Activated B cell treated with CpG ODN at 0.5 μM for 24 hours (primary cell): ENCODE measurements at regions of chr12 and their contacts with region 1.

Region 1: GRCh38 chr12:120971299-120972179 is 6.8 kb upstream of the HNF1A start:
- DNase-seq: no peak
- ATAC-seq: peak; percentile 94
- H3K4me3 Mint-ChIP-seq: no peak overlapping the region
- H3K27ac Mint-ChIP-seq: no peak overlapping the region
- H3K4me1 Mint-ChIP-seq: peaks cover 8% of the 10 kb centered on the region
- H3K27me3 Mint-ChIP-seq: peaks cover 3% of the 10 kb centered on the region
- CTCF ChIP-seq: no peak

Region 2: GRCh38 chr12:120356567-120357030 is 614.9 kb before region 1 on chr12:
- CTCF ChIA-PET with region 1: no interaction called
- POLR2A ChIA-PET with region 1: no interaction called
- intact Hi-C with region 1: loop called (anchors 5 kb)
- DNase-seq: peak; percentile 59
- ATAC-seq: peak; percentile 91
- H3K4me3 Mint-ChIP-seq: no peak overlapping the region
- H3K27ac Mint-ChIP-seq: no peak overlapping the region
- H3K4me1 Mint-ChIP-seq: peaks cover 3% of the 10 kb centered on the region
- H3K27me3 Mint-ChIP-seq: peaks cover 26% of the 10 kb centered on the region
- CTCF ChIP-seq: peak; percentile 22

Region 3: DNA sequence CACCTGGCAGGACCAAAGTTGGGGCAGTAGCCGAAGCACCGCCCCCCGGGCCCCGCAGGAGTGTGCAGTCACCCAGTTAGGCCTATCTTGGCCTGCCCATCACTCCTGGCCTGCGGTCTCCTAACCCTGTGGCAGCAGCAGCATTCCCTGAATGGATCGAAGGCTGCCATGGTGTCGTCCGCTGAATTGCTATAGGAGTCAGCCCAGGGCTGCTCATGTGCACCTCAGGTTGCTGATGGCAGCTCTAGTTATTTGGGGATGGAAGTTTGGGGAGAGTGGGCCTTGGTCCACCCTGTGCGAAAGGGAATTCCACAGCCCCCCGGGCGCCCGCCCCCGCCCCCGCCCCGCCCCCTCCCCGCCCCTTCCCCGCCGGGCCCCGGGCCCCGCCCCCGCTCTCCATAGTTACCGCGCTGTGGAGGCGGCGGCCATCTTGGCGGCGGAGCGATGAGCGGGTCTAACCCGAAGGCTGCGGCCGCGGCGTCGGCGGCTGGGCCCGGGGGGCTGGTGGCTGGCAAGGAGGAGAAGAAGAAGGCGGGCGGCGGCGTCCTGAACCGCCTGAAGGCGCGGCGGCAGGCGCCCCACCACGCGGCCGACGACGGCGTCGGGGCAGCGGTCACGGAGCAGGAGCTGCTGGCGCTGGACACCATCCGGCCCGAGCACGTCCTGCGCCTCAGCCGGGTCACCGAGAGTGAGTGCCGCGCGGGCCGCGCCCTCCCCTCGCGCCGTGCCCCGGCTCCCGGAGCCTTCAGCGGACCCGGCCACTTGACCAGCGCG is 261.3 kb before region 1 on chr12 and contains the start of gene UNC119B:
- CTCF ChIA-PET with region 1: interaction called, 7 read pairs
- POLR2A ChIA-PET with region 1: no interaction called
- intact Hi-C with region 1: loop called (anchors 1 kb)
- DNase-seq: peak; percentile 71
- ATAC-seq: peak; percentile 92
- H3K4me3 Mint-ChIP-seq: peak within 1 kb of the TSS; percentile 89
- H3K27ac Mint-ChIP-seq: peak within 1 kb of the TSS; percentile 82
- H3K4me1 Mint-ChIP-seq: peaks cover 29% of the 10 kb centered on the region
- H3K27me3 Mint-ChIP-seq: no peaks in the 10 kb centered on the region
- CTCF ChIP-seq: no peak
- total RNA-seq, gene UNC119B: 17.3 and 18.5 TPM in 2 replicates

Region 4: DNA sequence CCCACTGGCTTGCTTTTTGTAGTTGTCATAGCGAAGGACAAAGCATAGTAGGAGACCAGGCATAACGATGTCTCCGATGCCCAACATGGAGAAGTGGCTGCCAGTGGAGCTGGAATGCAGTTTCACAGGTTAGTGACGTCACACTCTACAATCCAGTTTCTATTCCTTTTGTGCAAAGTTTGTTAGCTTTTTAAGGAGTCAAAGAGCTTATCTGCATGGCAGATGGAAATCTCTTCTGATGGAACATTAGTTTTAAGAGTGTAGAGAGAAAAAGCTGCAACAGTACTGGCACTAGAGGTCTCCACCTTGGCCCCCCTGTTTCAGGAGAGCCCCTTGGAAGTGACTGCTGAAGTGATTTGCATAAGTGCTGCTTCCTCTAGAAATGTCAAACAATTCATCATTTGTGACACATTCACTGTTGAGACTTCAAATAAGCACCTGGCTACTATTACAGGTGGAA is 204.0 kb before region 1 on chr12:
- CTCF ChIA-PET with region 1: interaction called, 10 read pairs
- POLR2A ChIA-PET with region 1: no interaction called
- intact Hi-C with region 1: no loop called
- DNase-seq: no peak
- ATAC-seq: peak; percentile 37
- H3K4me3 Mint-ChIP-seq: no peak overlapping the region
- H3K27ac Mint-ChIP-seq: no peak overlapping the region
- H3K4me1 Mint-ChIP-seq: peaks cover 15% of the 10 kb centered on the region
- H3K27me3 Mint-ChIP-seq: no peaks in the 10 kb centered on the region
- CTCF ChIP-seq: no peak

Region 5: GRCh38 chr12:120856980-120857379 is 114.6 kb before region 1 on chr12:
- CTCF ChIA-PET with region 1: interaction called, 11 read pairs
- POLR2A ChIA-PET with region 1: interaction called, 4 read pairs
- intact Hi-C with region 1: loop called (anchors 1 kb)
- DNase-seq: no peak
- ATAC-seq: peak; percentile 50
- H3K4me3 Mint-ChIP-seq: peak overlapping the region; percentile 52
- H3K27ac Mint-ChIP-seq: peak overlapping the region; percentile 55
- H3K4me1 Mint-ChIP-seq: peaks cover 68% of the 10 kb centered on the region
- H3K27me3 Mint-ChIP-seq: no peaks in the 10 kb centered on the region
- CTCF ChIP-seq: no peak

Region 6: DNA sequence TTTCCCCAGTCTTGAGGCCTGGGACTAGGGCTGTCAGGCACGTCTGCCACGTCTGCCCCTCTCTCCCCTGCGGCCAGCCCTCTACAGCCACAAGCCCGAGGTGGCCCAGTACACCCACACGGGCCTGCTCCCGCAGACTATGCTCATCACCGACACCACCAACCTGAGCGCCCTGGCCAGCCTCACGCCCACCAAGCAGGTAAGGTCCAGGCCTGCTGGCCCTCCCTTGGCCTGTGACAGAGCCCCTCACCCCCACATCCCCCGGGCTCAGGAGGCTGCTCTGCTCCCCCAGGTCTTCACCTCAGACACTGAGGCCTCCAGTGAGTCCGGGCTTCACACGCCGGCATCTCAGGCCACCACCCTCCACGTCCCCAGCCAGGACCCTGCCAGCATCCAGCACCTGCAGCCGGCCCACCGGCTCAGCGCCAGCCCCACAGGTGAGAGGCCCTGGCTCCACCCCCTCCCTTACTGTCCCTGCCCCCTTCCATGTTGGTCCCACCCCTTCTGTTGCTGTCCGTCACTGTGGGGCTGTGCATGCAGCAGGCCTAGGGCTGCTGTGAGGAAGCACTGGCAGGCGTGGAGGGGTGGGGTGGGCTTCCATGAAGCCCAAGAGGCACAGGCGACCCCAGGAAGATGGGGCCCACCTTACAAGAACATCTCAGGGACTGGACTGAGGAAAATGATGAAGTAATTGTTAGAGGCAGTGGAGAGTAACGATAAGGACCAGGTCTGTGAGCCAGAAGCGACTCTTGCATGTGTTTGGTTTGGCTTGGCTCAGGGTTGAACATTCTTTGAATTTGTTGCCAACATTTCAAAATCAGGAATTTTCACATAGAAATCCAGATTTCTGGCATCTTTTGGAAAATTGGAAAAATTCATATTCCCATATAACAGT is 27.9 kb after region 1 on chr12:
- CTCF ChIA-PET with region 1: no interaction called
- POLR2A ChIA-PET with region 1: no interaction called
- intact Hi-C with region 1: no loop called
- DNase-seq: no peak
- ATAC-seq: no peak
- H3K4me3 Mint-ChIP-seq: no peak overlapping the region
- H3K27ac Mint-ChIP-seq: no peak overlapping the region
- H3K4me1 Mint-ChIP-seq: no peaks in the 10 kb centered on the region
- H3K27me3 Mint-ChIP-seq: peaks cover 12% of the 10 kb centered on the region
- CTCF ChIP-seq: no peak

Region 7: GRCh38 chr12:121159467-121160307 is 188.1 kb after region 1 on chr12:
- CTCF ChIA-PET with region 1: no interaction called
- POLR2A ChIA-PET with region 1: no interaction called
- intact Hi-C with region 1: no loop called
- DNase-seq: no peak
- ATAC-seq: peak; percentile 56
- H3K4me3 Mint-ChIP-seq: peak overlapping the region; percentile 29
- H3K27ac Mint-ChIP-seq: peak overlapping the region; percentile 60
- H3K4me1 Mint-ChIP-seq: peaks cover 12% of the 10 kb centered on the region
- H3K27me3 Mint-ChIP-seq: no peaks in the 10 kb centered on the region
- CTCF ChIP-seq: no peak

Region 8: GRCh38 chr12:121883315-121883660 is 911.7 kb after region 1 on chr12:
- CTCF ChIA-PET with region 1: no interaction called
- POLR2A ChIA-PET with region 1: no interaction called
- intact Hi-C with region 1: no loop called
- DNase-seq: no peak
- ATAC-seq: no peak
- H3K4me3 Mint-ChIP-seq: no peak overlapping the region
- H3K27ac Mint-ChIP-seq: no peak overlapping the region
- H3K4me1 Mint-ChIP-seq: peaks cover 5% of the 10 kb centered on the region
- H3K27me3 Mint-ChIP-seq: peaks cover 2% of the 10 kb centered on the region
- CTCF ChIP-seq: no peak

Region 9: DNA sequence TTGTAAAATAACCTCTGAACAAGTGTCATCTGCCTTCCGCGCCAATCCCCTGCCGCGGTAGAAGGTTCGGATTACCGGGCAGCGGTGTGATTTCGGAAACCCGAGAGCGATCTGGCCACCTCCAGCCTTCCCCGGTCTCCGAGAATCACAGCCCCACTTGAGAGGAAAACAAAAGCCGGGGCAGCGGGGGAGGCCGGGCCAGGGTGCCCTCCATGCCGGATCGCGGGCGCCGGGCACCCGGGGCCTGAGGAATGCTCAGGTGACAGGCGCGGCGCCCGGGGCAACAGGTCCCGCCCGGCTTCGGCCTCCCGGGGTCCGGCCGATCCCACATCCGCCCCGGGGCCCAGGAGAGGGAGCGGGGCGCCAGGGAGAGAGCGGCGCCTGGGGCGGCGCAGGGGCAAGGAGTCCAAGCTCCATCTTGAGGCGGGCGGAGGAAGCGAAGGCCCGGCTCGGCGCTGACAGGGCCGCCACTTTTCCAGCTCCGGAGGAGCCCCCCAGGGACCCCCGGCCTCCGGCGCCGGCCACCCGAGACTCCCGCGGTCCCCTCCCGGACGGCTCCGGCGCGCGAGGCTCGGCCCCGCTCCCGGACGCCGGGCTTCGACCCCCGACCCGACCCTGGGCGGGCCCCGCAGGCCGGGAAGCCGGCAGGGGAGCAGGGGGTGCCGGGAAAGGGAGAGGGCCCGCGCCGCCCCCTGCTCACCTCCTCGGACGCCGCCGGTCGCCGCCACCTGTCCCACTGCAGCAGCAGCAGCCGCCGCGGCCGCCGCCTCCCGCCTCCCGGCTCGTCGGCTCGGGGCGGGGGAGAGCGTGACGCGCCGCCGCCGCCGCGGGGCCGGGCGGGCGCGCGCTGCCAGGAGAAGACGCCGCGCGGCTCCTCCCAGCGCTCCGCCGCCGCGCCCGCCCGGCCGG is 1450.5 kb after region 1 on chr12 and contains the start of gene CLIP1:
- CTCF ChIA-PET with region 1: no interaction called
- POLR2A ChIA-PET with region 1: no interaction called
- intact Hi-C with region 1: no loop called
- DNase-seq: peak; percentile 71
- ATAC-seq: peak; percentile 67
- H3K4me3 Mint-ChIP-seq: peak within 1 kb of the TSS; percentile 91
- H3K27ac Mint-ChIP-seq: peak within 1 kb of the TSS; percentile 90
- H3K4me1 Mint-ChIP-seq: peaks cover 59% of the 10 kb centered on the region
- H3K27me3 Mint-ChIP-seq: no peaks in the 10 kb centered on the region
- CTCF ChIP-seq: no peak
- total RNA-seq, gene CLIP1: 58.6 and 63.2 TPM in 2 replicates